ENCODE measurements at regions of chr1 and their contacts with region 1.

Region 1: GRCh38 chr1:101105877-101106276 is 80.3 kb upstream of the DPH5 start:
- DNase-seq: no peak
- ATAC-seq: peak; percentile 41 to 88 (median 62)
- H3K4me3 ChIP-seq: no peak overlapping the region
- H3K27ac ChIP-seq: no peak overlapping the region
- H3K4me1 ChIP-seq: peaks cover 0 to 26% (median 9%) of the 10 kb centered on the region in 12 donors
- H3K27me3 ChIP-seq: no peaks in the 10 kb centered on the region
- CTCF ChIP-seq: no peak
- POLR2A ChIP-seq: no peak

Region 2: DNA sequence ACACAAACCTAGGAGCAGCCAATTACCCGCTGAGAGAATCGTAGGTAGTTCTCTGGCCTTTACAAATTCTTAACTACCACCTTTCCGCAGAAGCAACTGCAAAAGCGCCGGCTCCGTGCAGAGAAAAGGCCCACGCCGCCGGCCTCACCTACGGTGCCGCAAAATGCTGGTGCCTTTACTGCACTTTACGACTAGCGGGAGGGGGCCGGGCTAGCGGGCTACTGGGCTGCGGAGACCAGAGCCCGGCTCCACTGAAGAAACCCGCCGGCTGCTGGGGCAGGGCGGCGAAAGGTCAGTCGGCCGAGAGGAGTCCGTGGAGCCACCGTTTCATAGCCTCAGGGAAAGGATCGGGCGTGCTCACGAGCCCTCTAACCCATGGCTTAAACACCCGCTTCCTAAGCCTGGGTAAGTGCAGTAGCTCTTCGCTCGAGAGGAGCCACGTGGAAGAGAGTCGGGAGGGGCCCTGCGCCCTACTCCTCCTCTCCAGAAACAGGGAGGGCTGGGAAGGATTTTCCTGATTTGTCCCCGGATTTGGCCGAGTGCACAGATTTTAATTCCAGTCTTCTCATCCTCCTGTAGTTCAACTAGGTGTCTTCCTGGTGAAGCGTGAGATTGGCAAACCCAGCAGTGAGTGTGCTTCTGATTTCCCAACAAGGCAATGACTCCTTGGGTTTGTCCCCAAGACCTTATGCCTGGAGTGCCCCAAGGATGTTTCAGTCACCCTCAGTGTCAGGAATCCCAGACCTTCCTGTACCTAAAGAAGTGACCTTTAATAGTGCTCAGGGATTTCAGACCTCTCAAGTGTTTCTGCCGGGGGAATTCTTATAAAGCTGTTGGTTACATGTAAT is 80.0 kb before region 1 on chr1 and contains the start of gene DPH5:
- intact Hi-C with region 1: loop called in 1 of 10 experiments (anchors 10 kb)
- DNase-seq: peak; percentile 88 to 95 (median 94)
- ATAC-seq: peak; percentile 98 to 99 (median 98)
- H3K4me3 ChIP-seq: peak within 1 kb of the TSS; percentile 44 to 88 (median 72)
- H3K27ac ChIP-seq: peak within 1 kb of the TSS; percentile 56 to 93 (median 88)
- H3K4me1 ChIP-seq: peaks cover 0 to 56% (median 18%) of the 10 kb centered on the region in 12 donors
- H3K27me3 ChIP-seq: no peaks in the 10 kb centered on the region
- CTCF ChIP-seq: no peak
- POLR2A ChIP-seq: no peak
- total RNA-seq, gene DPH5: 14.8 to 36.2 (median 26.5) TPM

Region 3: GRCh38 chr1:101065575-101065974 is 40.3 kb before region 1 on chr1:
- intact Hi-C with region 1: loop called in 1 of 10 experiments (anchors 5 kb)
- DNase-seq: no peak
- ATAC-seq: no peak
- H3K4me3 ChIP-seq: no peak overlapping the region
- H3K27ac ChIP-seq: no peak overlapping the region
- H3K4me1 ChIP-seq: peaks cover 0 to 12% (median 4%) of the 10 kb centered on the region in 12 donors
- H3K27me3 ChIP-seq: no peaks in the 10 kb centered on the region
- CTCF ChIP-seq: no peak
- POLR2A ChIP-seq: no peak

Region 4: GRCh38 chr1:101166583-101167120 is 60.8 kb after region 1 on chr1:
- intact Hi-C with region 1: no loop called
- DNase-seq: no peak
- ATAC-seq: no peak
- H3K4me3 ChIP-seq: no peak overlapping the region
- H3K27ac ChIP-seq: no peak overlapping the region
- H3K4me1 ChIP-seq: peaks cover 3 to 38% (median 12%) of the 10 kb centered on the region in 12 donors
- H3K27me3 ChIP-seq: no peaks in the 10 kb centered on the region
- CTCF ChIP-seq: no peak
- POLR2A ChIP-seq: no peak

Measured in heart left ventricle (tissue), 16 donors.